A549 (cell line): ENCODE measurements at regions of chr1 and their contacts with region 1.

Region 1: DNA sequence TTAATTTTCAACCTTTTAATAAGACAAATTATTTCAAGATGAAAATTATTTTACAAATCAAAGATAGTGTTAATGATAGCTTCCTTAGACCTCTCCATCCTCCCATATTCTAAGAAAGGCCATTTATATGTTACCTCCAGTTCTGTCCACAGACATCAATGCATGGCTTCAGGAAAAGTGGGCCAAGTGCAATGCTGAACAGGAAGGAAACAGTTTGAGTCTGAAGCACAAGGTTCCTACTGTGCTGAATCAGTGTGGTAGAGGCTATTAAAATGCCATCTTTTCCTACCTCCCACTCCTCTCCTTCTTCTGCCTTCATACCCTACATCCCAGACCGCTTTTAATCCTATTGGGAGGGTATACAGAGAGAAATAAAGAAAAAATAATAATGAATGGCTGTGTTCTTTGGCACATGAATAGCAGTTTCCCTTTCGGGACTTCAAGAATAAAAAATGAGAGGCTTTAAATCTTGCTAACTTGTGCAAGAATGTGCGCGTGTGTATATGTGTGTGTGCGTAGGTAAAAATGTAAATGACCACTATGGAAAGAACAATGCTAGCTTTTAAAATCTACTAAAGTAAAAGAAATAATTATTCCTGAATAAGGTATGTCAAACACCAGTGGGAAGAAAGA is 62.6 kb upstream of the C1orf105 start:
- DNase-seq: no peak
- ATAC-seq: no peak
- H3K4me3 ChIP-seq: no peak overlapping the region
- H3K27ac ChIP-seq: peak overlapping the region; percentile 90 to 93
- H3K4me1 ChIP-seq: peaks cover 76% of the 10 kb centered on the region
- CTCF ChIP-seq: no peak
- EP300 ChIP-seq: no peak
- POLR2A ChIP-seq: no peak
- RAD21 ChIP-seq: no peak

Region 2: DNA sequence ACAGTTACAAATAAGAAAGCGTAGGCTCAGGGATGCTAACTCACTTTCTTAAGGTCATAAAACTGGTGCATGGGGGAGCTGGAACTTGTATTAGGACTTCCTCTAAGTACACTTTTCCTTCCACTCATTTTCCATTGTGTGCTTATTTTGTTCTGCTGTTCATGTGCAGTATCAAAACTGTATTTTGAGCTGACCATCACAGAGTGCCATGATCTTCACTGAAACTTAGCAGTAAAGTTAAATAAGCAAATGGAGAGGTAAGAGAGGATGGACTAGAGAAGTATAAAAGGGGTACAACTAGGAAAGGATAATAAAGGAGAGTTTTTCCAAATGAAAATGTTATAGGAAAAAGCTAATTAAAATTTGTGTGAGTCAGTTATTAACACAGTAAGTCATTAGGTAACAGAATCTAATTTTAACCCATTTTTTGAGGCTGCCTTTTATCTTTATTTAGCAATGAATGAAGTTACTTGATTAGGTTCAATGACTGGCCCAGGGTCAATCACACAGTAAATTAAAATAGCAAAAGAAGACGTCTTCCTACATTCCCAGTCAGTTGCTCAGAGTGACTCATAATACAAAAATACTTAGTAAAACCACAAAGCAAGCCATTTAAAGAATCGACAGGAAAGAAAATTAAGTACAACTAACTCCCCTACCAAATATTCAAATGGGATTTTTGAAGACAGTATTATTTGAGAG is 103.2 kb before region 1 on chr1:
- CTCF ChIA-PET with region 1: interaction called, 11 read pairs
- POLR2A ChIA-PET with region 1: interaction called, 16 read pairs
- DNase-seq: peak; percentile 11 to 75
- ATAC-seq: peak; percentile 85 to 93
- H3K4me3 ChIP-seq: no peak overlapping the region
- H3K27ac ChIP-seq: peak overlapping the region; percentile 62 to 79
- H3K4me1 ChIP-seq: peaks cover 27% of the 10 kb centered on the region
- CTCF ChIP-seq: no peak
- EP300 ChIP-seq: peak; percentile 42 to 62; a peak in 2 of 5 replicates
- POLR2A ChIP-seq: no peak
- RAD21 ChIP-seq: peak in 1 of 2 experiments; percentile 30; a peak in 1 of 5 replicates

Region 3: GRCh38 chr1:172269644-172270043 is 88.2 kb before region 1 on chr1:
- CTCF ChIA-PET with region 1: interaction called, 5 read pairs
- POLR2A ChIA-PET with region 1: interaction called, 18 read pairs
- DNase-seq: peak in 1 of 2 experiments; percentile 50
- ATAC-seq: peak; percentile 85 to 86
- H3K4me3 ChIP-seq: no peak overlapping the region
- H3K27ac ChIP-seq: peak overlapping the region; percentile 70 to 86
- H3K4me1 ChIP-seq: peaks cover 59% of the 10 kb centered on the region
- CTCF ChIP-seq: no peak
- EP300 ChIP-seq: no peak
- POLR2A ChIP-seq: no peak
- RAD21 ChIP-seq: peak in 1 of 2 experiments; percentile 43; a peak in 2 of 5 replicates

Region 4: DNA sequence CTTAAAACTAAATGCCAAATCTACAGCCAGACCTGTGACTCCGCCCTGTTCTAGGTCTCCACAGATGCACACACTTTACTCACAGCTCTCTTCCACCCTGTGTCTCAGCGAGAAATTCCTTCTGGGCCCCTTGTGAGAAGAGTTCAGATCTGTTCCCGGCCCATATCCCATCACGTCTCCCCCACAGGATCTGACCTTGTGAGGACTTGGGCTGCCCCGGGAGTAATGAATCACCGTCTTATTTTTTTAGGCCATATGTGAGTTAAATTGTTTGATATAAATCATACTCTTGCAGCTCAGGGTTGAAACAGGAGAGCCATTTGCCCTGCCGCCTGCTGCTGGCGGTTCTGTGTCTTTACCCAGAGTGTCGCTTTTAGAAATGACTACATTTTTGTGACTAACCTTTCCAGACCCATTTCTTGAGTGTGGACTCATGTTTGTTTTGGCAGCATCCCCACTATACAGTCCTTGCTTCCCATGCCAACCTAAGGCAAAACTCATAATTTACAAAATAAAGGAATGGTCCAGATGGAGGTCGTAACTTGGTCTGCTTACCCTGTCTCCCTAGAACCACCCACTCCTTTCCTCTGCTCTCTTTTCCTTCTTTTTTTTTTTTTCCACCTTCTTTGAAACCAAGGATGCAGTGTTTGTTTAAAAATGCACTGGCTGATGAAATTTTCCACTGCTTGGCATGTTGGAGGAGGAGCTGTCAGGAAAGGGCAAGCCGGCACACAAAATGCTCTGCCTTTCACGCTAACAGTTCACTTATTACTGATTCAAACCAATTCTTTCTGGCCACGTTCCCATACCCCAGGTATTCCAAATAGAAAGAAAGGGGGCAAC is 35.4 kb before region 1 on chr1:
- CTCF ChIA-PET with region 1: interaction called, 13 read pairs
- POLR2A ChIA-PET with region 1: interaction called, 120 read pairs
- DNase-seq: peak; percentile 59 to 92
- ATAC-seq: peak; percentile 93 to 95
- H3K4me3 ChIP-seq: peak overlapping the region; percentile 39
- H3K27ac ChIP-seq: peak overlapping the region; percentile 91 to 95
- H3K4me1 ChIP-seq: peaks cover 55% of the 10 kb centered on the region
- CTCF ChIP-seq: no peak
- EP300 ChIP-seq: peak; percentile 61 to 70; a peak in 2 of 5 replicates
- POLR2A ChIP-seq: no peak
- RAD21 ChIP-seq: peak; percentile 20 to 60

Region 5: GRCh38 chr1:172343240-172344160 is 14.4 kb before region 1 on chr1:
- CTCF ChIA-PET with region 1: interaction called, 10 read pairs
- POLR2A ChIA-PET with region 1: interaction called, 9 read pairs
- DNase-seq: no peak
- ATAC-seq: peak; percentile 43 to 56; a peak in 3 of 6 replicates
- H3K4me3 ChIP-seq: no peak overlapping the region
- H3K27ac ChIP-seq: peak overlapping the region; percentile 60 to 70
- H3K4me1 ChIP-seq: peaks cover 15% of the 10 kb centered on the region
- CTCF ChIP-seq: no peak
- EP300 ChIP-seq: no peak
- POLR2A ChIP-seq: no peak
- RAD21 ChIP-seq: 0 out of 5 replicates have a peak, but pooled peaks of 1 of the 2 experiments have one; percentile 1

Region 6: DNA sequence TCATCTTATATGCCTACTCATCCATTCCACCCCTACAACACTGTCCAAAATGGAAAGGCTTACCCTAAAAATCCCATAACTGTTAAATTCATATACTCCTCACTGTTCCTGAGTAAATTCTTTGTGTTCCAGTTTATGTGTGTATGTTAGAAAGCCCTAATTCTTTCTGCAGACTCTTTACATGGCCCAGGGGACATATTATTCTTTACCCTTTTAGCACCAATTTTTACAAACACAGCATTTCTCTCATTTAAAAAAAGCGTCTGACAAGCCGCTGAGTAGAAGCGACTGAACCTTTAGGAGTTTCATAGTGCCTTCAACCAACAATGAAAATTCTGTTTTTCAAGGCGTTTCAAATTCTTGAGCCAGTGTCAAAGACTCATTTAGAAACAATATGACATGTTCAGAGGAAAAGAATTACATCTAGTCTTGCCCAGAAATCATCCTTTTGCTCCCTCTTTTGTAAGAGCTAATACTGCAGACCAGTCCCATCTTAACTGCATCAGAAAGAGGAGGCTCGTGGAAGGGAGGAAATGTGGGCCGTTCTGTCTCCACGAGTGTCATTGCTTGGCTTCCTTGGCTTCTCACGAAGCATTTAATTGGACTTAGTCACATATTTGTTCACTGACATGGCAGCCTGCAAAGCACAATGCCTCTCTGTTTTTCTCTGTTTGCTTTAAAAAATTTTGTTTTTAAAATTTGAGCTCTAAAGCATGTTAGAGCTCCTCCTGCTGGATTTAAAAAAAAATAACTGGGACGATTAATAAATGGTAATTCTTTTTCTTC is 41.3 kb after region 1 on chr1:
- CTCF ChIA-PET with region 1: interaction called, 21 read pairs
- POLR2A ChIA-PET with region 1: interaction called, 24 read pairs
- DNase-seq: peak; percentile 78 to 90
- ATAC-seq: peak; percentile 90 to 95
- H3K4me3 ChIP-seq: no peak overlapping the region; the same call in 2 of the 3 replicates
- H3K27ac ChIP-seq: peak overlapping the region; percentile 83 to 86
- H3K4me1 ChIP-seq: peaks cover 28% of the 10 kb centered on the region
- CTCF ChIP-seq: peak; percentile 92
- EP300 ChIP-seq: peak; percentile 13 to 14; a peak in 1 of 5 replicates
- POLR2A ChIP-seq: no peak
- RAD21 ChIP-seq: peak; percentile 93 to 99

Region 7: GRCh38 chr1:172429331-172430127 is 71.7 kb after region 1 on chr1:
- CTCF ChIA-PET with region 1: no interaction called
- POLR2A ChIA-PET with region 1: no interaction called
- DNase-seq: peak; percentile 65 to 82
- ATAC-seq: peak; percentile 74 to 89
- H3K4me3 ChIP-seq: no peak overlapping the region
- H3K27ac ChIP-seq: no peak overlapping the region
- H3K4me1 ChIP-seq: no peaks in the 10 kb centered on the region
- CTCF ChIP-seq: peak; percentile 99
- EP300 ChIP-seq: no peak
- POLR2A ChIP-seq: no peak
- RAD21 ChIP-seq: peak; percentile 95 to 96